Left colon (tissue), 2 donors: ENCODE measurements at regions of chr2 and their contacts with region 1.

Region 1: GRCh38 chr2:155377266-155377680 is 678.8 kb downstream of the KCNJ3 start:
- DNase-seq: no peak
- ATAC-seq: no peak

Region 2: DNA sequence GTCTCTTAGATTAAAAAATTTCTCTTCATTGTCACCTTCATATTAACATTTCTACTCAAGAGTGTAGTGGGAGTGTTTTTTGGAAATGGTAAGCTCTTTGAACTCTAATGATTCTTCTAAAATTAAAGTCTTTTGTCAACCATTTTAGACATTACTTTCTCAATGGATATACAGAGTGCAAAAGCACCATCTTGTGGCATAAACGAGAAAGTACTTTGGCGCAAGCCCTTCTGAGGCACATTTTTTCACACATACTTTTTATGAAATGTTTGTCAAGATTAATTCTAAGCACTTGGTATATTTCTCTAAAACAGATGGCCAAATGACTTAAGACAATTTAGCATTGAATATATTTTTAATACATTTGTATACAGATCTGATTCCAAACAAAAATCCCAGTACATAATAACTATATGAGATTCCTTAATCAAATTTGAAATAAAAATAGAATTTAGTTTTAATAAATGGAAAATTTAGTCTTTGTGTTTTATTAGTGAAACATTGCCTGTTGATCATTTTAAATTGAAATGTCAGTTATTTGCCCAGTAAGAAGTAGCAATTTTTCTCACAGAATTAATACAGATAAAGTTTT is 1816.9 kb after region 1 on chr2:
- intact Hi-C with region 1: loop called in 1 of 2 experiments (anchors 10 kb)
- DNase-seq: peak in 1 of 2 donors; percentile 12
- ATAC-seq: peak; percentile 70